Activated CD4-positive, alpha-beta T cell treated with anti-CD3 and anti-CD28 coated beads for 36 hours (primary cell): ENCODE measurements at regions of chr2 and their contacts with region 1.

Region 1: DNA sequence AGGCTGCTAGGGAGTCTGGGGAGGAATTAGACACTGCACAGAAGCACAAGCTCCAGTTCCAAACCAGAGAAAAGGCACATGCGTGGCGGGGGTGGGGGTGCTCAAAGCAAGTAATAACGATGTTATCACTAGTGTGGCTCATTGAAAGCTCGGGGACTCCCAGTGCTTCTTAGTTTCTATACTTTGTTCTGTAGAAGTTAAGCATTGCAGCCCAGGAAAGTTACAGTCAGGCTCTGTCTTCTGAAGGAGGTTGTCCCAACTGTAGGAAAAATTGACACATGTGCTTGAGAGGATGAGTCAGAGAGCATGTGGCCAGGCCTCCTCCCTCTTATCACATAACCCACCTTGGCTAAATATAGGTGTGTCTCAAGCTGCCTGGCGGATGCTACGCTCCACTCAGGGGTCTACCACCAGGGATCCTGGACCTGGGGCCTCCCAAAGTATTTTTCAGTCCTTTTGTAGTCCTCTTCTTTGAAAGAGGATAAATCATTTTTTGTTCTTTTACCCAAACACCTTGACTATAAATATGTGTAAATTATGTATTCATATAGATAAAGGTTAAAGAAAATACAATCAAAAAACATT is 3.8 kb downstream of the GALNT5 start:
- DNase-seq: peak; percentile 84
- ATAC-seq: peak; percentile 79
- H3K4me3 Mint-ChIP-seq: peak overlapping the region; percentile 4
- H3K27ac Mint-ChIP-seq: peak overlapping the region; percentile 26
- H3K4me1 Mint-ChIP-seq: peaks cover 38% of the 10 kb centered on the region
- H3K27me3 Mint-ChIP-seq: peaks cover 12% of the 10 kb centered on the region

Region 2: GRCh38 chr2:157245846-157246764 is 15.2 kb before region 1 on chr2:
- CTCF ChIA-PET with region 1: interaction called, 3 read pairs
- POLR2A ChIA-PET with region 1: no interaction called
- intact Hi-C with region 1: loop called (anchors 1 kb)
- DNase-seq: peak; percentile 63
- ATAC-seq: peak; percentile 100
- H3K4me3 Mint-ChIP-seq: no peak overlapping the region
- H3K27ac Mint-ChIP-seq: peak overlapping the region; percentile 62
- H3K4me1 Mint-ChIP-seq: peaks cover 24% of the 10 kb centered on the region
- H3K27me3 Mint-ChIP-seq: peaks cover 18% of the 10 kb centered on the region

Region 3: DNA sequence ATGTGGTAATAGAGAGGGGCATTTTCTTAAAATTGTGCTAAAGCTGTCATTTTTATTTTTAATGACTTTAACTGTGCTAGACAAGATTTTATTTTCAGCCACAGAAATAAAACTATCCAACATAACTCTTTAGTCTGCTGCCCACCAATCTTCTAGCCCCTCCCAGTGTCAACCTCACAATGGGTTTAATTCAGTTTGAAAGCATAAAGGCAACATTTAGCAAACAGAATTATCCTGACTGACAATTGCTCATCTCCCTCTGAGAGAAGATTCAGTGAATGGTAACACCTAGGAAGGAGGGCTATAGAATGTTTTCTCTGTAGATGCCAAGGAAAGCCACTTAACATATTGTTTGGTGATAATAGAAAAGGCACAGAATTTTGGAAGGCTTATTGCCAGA is 59.1 kb after region 1 on chr2:
- CTCF ChIA-PET with region 1: no interaction called
- POLR2A ChIA-PET with region 1: no interaction called
- intact Hi-C with region 1: no loop called
- DNase-seq: no peak
- ATAC-seq: no peak
- H3K4me3 Mint-ChIP-seq: no peak overlapping the region
- H3K27ac Mint-ChIP-seq: no peak overlapping the region
- H3K4me1 Mint-ChIP-seq: peaks cover 21% of the 10 kb centered on the region
- H3K27me3 Mint-ChIP-seq: no peaks in the 10 kb centered on the region

Region 4: GRCh38 chr2:157404363-157404762 is 143.1 kb after region 1 on chr2:
- CTCF ChIA-PET with region 1: no interaction called
- POLR2A ChIA-PET with region 1: no interaction called
- intact Hi-C with region 1: loop called in 1 of 2 experiments (anchors 1 kb)
- DNase-seq: peak; percentile 72
- ATAC-seq: peak; percentile 95
- H3K4me3 Mint-ChIP-seq: peak overlapping the region; percentile 0
- H3K27ac Mint-ChIP-seq: peak overlapping the region; percentile 80
- H3K4me1 Mint-ChIP-seq: peaks cover 75% of the 10 kb centered on the region
- H3K27me3 Mint-ChIP-seq: no peaks in the 10 kb centered on the region

Region 5: DNA sequence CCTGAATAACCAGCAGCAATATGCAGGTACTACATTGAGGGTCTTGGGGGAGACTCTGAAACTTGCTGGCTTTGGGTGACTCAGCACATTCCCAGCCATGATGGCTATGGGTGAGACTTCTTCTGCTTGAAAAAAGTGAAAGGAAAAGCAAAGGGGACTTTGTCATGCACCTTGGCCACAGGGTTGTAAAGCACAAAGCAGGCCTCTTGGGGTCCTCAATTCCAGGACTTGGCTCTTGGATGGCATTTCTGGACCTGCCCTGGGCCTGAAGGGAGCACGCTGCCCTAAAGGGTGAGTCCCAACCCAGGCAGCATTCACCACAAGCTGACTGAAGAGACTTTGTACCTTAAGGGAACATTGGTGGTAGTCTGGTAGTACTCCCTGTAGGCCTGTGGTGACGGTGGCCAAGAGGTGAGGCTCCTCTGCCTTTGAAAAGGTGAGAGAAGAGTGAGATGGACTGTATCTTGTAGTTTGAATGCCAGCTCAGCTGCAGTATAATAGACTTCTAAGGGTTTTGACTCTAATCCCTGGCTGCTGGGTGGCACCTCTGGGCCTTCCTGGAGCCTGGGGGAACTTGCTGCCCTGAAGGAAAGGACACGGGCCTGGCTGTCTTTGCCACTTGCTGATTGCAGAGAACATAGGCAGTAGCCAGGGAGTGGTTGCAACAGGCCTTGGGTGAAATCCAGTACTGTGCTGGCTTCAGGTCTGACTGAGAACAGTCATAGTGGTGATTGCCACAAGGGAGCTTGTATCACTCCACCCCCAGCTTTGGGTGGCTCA is 219.1 kb after region 1 on chr2:
- CTCF ChIA-PET with region 1: no interaction called
- POLR2A ChIA-PET with region 1: no interaction called
- intact Hi-C with region 1: loop called in 1 of 2 experiments (anchors 5 kb)
- DNase-seq: peak; percentile 81
- ATAC-seq: peak; percentile 71
- H3K4me3 Mint-ChIP-seq: peak overlapping the region; percentile 64
- H3K27ac Mint-ChIP-seq: peak overlapping the region; percentile 95
- H3K4me1 Mint-ChIP-seq: peaks cover 86% of the 10 kb centered on the region
- H3K27me3 Mint-ChIP-seq: no peaks in the 10 kb centered on the region

Region 6: DNA sequence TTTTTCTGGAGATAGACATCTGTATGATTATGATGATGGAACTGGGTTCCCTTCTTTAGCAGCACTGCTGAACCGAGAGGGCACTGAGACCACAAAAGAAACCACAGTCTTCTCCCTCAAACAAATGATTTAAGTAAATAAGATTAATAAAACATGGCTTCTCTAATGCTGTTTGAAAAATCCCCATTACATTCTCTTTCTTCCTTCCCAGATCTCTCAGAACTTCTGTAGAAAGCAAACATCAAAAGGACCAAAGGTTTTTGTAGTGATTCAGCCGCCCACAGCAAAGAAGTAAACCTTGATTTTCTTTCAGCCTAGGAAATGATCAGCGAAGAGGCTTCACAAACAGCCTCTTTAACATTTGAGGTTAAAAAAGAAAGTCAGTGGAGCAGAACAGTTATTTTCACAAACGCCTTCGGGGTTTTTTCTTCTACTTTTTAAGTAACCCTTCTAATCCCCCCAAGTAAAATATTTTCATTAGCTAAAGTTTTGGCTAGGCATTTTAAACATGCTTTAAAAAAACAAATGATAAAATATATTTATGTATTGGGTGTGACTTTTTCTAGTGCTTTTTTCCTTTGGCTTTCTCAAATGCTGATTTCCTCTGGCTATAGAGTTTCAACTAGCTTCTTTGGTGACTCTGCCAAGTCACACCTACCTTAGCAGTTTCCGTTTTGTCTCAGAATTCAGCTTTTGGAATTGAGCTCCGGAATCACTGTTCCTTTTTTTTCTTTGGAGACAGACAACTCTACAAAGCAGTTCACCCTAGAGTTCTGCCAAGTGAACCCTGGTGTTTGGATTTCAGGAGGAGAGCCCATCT is 930.0 kb after region 1 on chr2:
- CTCF ChIA-PET with region 1: no interaction called
- POLR2A ChIA-PET with region 1: no interaction called
- intact Hi-C with region 1: loop called in 1 of 2 experiments (anchors 10 kb)
- DNase-seq: peak; percentile 45
- ATAC-seq: peak; percentile 91
- H3K4me3 Mint-ChIP-seq: peak overlapping the region; percentile 15
- H3K27ac Mint-ChIP-seq: peak overlapping the region; percentile 63
- H3K4me1 Mint-ChIP-seq: peaks cover 31% of the 10 kb centered on the region
- H3K27me3 Mint-ChIP-seq: peaks cover 30% of the 10 kb centered on the region